ENCODE measurements at regions of chr4 and their contacts with region 1.

Region 1: GRCh38 chr4:25234390-25235370 is 847 bp downstream of the PI4K2B start:
- DNase-seq: peak; percentile 60
- H3K4me3 Mint-ChIP-seq: peak overlapping the region; percentile 87
- H3K27ac Mint-ChIP-seq: peak overlapping the region; percentile 94
- H3K4me1 Mint-ChIP-seq: peaks cover 45% of the 10 kb centered on the region
- H3K27me3 Mint-ChIP-seq: no peaks in the 10 kb centered on the region

Region 2: GRCh38 chr4:25159884-25160713 is 74.6 kb before region 1 on chr4 and contains the start of gene SEPSECS:
- CTCF ChIA-PET with region 1: no interaction called
- POLR2A ChIA-PET with region 1: interaction called, 10 read pairs
- DNase-seq: peak; percentile 98
- H3K4me3 Mint-ChIP-seq: peak within 1 kb of the TSS; percentile 89
- H3K27ac Mint-ChIP-seq: peak within 1 kb of the TSS; percentile 94
- H3K4me1 Mint-ChIP-seq: peaks cover 53% of the 10 kb centered on the region
- H3K27me3 Mint-ChIP-seq: no peaks in the 10 kb centered on the region
- total RNA-seq, gene SEPSECS: 13.9 to 14.3 TPM

Measured in activated CD4-positive, alpha-beta T cell treated with anti-CD3 and anti-CD28 coated beads, Interleukin-2, amount 10 ng/mL, durations not matched to agents 7 days and 5 days (primary cell).